AG04449 (cell line): ENCODE measurements at regions of chr19 and their contacts with region 1.

Region 1: DNA sequence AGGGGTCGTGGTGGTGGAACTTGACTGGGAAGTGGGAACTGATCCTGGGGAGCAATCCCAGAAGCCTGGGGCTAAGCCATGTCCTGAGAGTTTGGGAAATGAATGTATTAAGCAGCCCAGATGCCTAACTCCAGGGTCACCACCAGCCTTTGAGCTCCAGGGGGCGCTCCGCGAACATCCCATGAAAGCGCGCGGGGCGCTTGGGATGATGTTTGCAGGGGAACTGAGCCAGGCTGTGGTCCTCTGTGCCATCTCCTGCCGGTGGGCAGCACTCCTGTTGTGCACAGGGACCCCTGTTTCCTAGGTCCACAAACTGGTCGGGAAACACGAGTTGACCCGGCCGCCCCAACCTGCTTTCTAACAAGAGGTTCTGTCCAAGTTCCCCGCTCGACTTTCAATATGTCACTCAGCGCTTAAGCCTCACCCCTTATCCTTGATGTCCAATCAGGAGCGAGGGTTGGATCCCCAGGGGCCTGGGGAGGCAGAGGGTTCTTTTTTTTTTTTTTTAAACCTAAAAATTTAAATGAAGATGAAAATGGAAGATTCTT is 14.4 kb downstream of the LEUTX start:
- DNase-seq: peak; percentile 19
- H3K4me3 ChIP-seq: peak overlapping the region; percentile 66
- CTCF ChIP-seq: peak; percentile 94

Region 2: GRCh38 chr19:39752390-39752789 is 40.7 kb before region 1 on chr19:
- CTCF ChIA-PET with region 1: no interaction called
- POLR2A ChIA-PET with region 1: no interaction called
- DNase-seq: no peak
- H3K4me3 ChIP-seq: no peak overlapping the region
- CTCF ChIP-seq: no peak

Region 3: GRCh38 chr19:39778763-39779162 is 14.3 kb before region 1 on chr19 and contains the start of gene LEUTX:
- CTCF ChIA-PET with region 1: interaction called, 22 read pairs
- POLR2A ChIA-PET with region 1: no interaction called
- DNase-seq: no peak
- H3K4me3 ChIP-seq: no peak within 1 kb of the TSS
- CTCF ChIP-seq: no peak

Region 4: GRCh38 chr19:39818626-39819097 is 25.6 kb after region 1 on chr19:
- CTCF ChIA-PET with region 1: interaction called, 10 read pairs
- POLR2A ChIA-PET with region 1: no interaction called
- DNase-seq: no peak
- H3K4me3 ChIP-seq: no peak overlapping the region
- CTCF ChIP-seq: no peak

Region 5: DNA sequence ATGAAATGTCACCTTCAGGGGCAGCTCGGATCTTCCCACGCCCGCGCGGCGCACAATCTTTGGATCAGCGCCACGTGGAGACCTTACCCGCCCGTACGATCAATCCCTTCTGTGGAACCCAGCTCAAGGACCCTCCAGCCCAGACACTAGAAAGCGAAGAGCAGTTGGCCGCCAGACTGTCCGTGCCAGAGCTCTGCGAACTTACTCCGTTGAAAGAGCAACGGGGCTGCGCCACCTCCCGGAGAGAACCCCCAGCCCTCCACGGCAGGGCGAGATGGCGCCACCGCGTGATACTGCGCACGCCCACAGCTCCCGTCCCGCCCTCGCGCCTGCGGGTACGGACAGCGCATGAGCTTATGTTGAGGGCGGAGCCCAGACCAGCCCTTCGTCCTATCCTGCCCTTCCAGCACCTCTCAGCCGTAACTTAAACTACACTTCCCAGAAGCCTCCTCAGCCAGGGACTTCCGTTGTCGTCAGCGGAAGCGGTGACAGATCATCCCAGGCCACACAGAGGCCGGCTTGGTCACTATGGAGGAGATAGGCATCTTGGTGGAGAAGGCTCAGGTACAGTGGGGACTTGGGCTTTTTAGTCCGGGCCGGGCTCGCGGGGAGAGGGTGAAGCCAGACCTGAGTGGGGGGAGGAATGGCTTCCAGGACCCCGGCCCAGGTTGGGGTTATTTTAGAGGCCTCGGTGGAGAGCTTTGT is 177.8 kb after region 1 on chr19 and contains the start of gene PSMC4:
- CTCF ChIA-PET with region 1: interaction called, 53 read pairs
- POLR2A ChIA-PET with region 1: interaction called, 3 read pairs
- DNase-seq: peak; percentile 96
- H3K4me3 ChIP-seq: peak within 1 kb of the TSS; percentile 96
- CTCF ChIP-seq: peak; percentile 86